ENCODE measurements at regions of chr1 and their contacts with region 1.

Region 1: GRCh38 chr1:28648474-28649198 is at the start of gene RNU11:
- DNase-seq: peak; percentile 79

Region 2: GRCh38 chr1:28428012-28428411 is 220.6 kb before region 1 on chr1:
- CTCF ChIA-PET with region 1: no interaction called
- POLR2A ChIA-PET with region 1: no interaction called
- DNase-seq: no peak

Region 3: GRCh38 chr1:28613175-28613574 is 35.5 kb before region 1 on chr1:
- CTCF ChIA-PET with region 1: no interaction called
- POLR2A ChIA-PET with region 1: no interaction called
- DNase-seq: no peak

Region 4: DNA sequence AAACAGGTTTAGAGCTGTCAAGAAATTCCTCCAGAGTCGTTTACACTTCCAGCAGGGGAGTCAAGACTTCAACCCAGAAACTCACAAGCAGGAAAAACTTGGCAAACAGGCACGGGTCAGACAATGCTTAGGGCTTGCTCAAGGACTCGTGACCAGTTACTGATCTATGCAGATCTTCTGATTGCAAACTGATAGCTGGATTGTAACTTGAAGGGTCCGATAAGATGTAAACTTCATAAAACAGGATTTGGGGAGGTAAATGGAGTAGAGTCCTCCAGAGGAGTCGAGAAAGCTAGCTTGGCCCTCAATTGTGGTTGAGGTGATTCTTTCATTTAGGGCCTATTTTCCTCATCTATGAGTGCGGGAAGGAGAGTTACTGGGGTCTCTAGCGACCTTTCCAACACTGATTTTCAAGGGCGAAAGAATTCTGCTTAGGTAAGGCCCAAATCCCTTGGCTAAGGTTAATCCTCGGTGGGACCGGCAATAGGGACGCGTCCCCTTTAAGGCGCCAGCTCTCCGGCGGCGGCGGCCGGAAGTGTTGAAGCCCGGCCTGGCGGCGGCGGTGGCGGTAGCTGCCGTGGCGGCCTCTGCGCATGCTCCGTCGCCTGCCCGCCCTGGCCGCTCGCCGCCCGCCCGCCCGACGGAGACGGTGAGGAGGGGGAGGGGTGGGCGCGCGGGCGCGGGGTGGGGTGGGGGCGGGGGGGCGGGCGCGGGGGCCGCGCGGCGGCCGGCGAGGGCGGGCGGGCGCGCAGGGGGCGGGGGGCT is 19.7 kb after region 1 on chr1 and contains the start of gene GMEB1:
- CTCF ChIA-PET with region 1: no interaction called
- POLR2A ChIA-PET with region 1: interaction called, 25 read pairs
- DNase-seq: peak; percentile 100

Region 5: DNA sequence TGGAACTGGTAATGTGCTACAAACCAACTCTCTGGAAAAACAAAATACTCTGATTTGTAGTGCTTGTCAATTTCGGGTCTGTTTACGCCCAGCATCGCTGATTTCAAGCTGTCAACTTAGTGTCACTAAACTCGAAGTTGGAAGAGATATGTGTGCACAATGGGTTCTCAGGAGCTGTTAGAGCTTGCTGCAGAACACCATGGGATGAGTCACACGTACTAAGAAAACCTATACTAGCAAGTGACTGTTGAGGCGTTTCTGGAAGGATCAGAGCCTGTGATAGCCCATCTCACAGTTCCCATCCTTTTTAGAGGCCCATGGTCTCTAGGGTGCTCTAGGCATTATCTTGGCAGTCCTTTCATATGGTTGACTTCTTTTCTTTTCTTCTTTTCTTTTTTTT is 34.2 kb after region 1 on chr1:
- CTCF ChIA-PET with region 1: no interaction called
- POLR2A ChIA-PET with region 1: interaction called, 10 read pairs
- DNase-seq: no peak

Region 6: GRCh38 chr1:28736450-28737306 is 88.0 kb after region 1 on chr1 and contains the start of gene YTHDF2:
- CTCF ChIA-PET with region 1: no interaction called
- POLR2A ChIA-PET with region 1: interaction called, 45 read pairs
- DNase-seq: peak; percentile 97

Region 7: DNA sequence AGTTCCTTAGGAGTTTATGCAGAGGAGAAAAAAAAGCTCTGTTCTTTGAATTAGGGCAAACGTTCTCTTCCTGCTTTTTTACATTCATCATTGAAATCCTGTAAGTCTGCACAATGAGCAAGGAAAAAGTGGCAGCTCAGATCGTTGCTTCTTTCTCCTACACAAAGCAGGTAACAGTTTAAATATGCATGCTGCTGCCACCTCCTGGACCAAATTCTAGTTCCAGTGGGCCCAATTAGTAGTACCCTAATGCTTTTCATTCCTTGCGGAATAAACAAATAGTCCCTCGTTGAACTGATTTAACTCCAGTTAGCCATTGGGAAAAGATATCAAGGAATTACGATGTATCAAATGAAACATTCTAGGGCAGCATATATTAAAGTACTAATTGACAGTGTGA is 108.2 kb after region 1 on chr1:
- CTCF ChIA-PET with region 1: no interaction called
- POLR2A ChIA-PET with region 1: interaction called, 10 read pairs
- DNase-seq: no peak